ENCODE measurements at regions of chr1 and their contacts with region 1.

Region 1: GRCh38 chr1:235011599-235012435 is 116.8 kb downstream of the TOMM20 start:
- DNase-seq: peak; percentile 71 to 95 (median 93)
- ATAC-seq: peak; percentile 95
- H3K4me3 ChIP-seq: peak overlapping the region; percentile 48
- H3K4me3 Mint-ChIP-seq: peak overlapping the region; percentile 72 to 84 (median 80)
- H3K27ac ChIP-seq: peak overlapping the region; percentile 91
- H3K27ac Mint-ChIP-seq: peak overlapping the region; percentile 91 to 98 (median 97)
- H3K4me1 ChIP-seq: peaks cover 27 to 34% of the 10 kb centered on the region in 2 donors
- H3K4me1 Mint-ChIP-seq: peaks cover 36 to 79% (median 67%) of the 10 kb centered on the region in 7 donors
- H3K27me3 ChIP-seq: no peaks in the 10 kb centered on the region
- H3K27me3 Mint-ChIP-seq: peaks cover 0 to 5% (median 0%) of the 10 kb centered on the region in 5 donors

Region 2: GRCh38 chr1:234499119-234499942 is 512.5 kb before region 1 on chr1:
- CTCF ChIA-PET with region 1: interaction called, 3 read pairs
- POLR2A ChIA-PET with region 1: no interaction called
- intact Hi-C with region 1: loop called in 1 of 2 experiments (anchors 2 kb)
- DNase-seq: peak; percentile 65 to 85 (median 78)
- ATAC-seq: peak; percentile 96
- H3K4me3 ChIP-seq: no peak overlapping the region
- H3K4me3 Mint-ChIP-seq: peak overlapping the region in 2 of 10 donors; percentile 33 to 62
- H3K27ac ChIP-seq: no peak overlapping the region
- H3K27ac Mint-ChIP-seq: peak overlapping the region in 4 of 9 donors; percentile 34 to 82 (median 74)
- H3K4me1 ChIP-seq: peaks cover 0 to 4% of the 10 kb centered on the region in 2 donors
- H3K4me1 Mint-ChIP-seq: peaks cover 0 to 62% (median 6%) of the 10 kb centered on the region in 7 donors
- H3K27me3 ChIP-seq: no peaks in the 10 kb centered on the region
- H3K27me3 Mint-ChIP-seq: no peaks in the 10 kb centered on the region

Region 3: GRCh38 chr1:234730770-234731568 is 280.8 kb before region 1 on chr1:
- CTCF ChIA-PET with region 1: no interaction called
- POLR2A ChIA-PET with region 1: no interaction called
- intact Hi-C with region 1: loop called in 1 of 2 experiments (anchors 1 kb)
- DNase-seq: peak in 8 of 9 donors; percentile 47 to 82 (median 68)
- ATAC-seq: peak; percentile 76
- H3K4me3 ChIP-seq: no peak overlapping the region
- H3K4me3 Mint-ChIP-seq: peak overlapping the region; percentile 45 to 77 (median 64)
- H3K27ac ChIP-seq: peak overlapping the region; percentile 43
- H3K27ac Mint-ChIP-seq: peak overlapping the region; percentile 57 to 96 (median 87)
- H3K4me1 ChIP-seq: peaks cover 35 to 42% of the 10 kb centered on the region in 2 donors
- H3K4me1 Mint-ChIP-seq: peaks cover 38 to 82% (median 62%) of the 10 kb centered on the region in 7 donors
- H3K27me3 ChIP-seq: no peaks in the 10 kb centered on the region
- H3K27me3 Mint-ChIP-seq: no peaks in the 10 kb centered on the region

Region 4: DNA sequence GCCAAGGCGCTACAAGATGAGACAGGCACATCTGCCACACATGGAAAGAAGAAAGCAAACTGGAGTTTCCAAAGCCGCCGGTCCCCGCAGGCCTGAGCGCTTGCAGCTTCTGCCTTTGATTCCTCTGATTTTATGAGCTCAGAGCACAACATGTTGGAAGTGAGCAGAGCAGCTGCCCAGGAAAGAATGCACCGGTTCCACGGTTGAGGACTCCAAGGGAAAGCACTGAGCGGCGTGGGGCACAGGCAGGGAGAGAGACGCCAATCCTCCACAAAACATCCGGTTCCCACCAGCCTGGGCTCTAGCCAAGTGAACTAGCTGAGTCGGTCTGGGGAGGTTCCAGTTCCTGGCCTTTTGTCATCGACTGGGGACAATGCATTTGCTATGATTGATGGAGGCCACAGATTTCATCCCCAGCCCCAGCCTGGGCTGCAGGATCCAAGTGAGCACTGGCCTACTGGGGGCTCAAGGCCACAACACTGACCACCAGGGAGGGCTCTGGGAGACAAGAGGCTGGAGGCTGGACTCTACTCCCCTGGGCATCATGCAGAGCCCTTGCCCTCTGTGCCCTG is 148.8 kb before region 1 on chr1:
- CTCF ChIA-PET with region 1: no interaction called
- POLR2A ChIA-PET with region 1: no interaction called
- intact Hi-C with region 1: no loop called
- DNase-seq: no peak
- ATAC-seq: no peak
- H3K4me3 ChIP-seq: no peak overlapping the region
- H3K4me3 Mint-ChIP-seq: no peak overlapping the region
- H3K27ac ChIP-seq: no peak overlapping the region
- H3K27ac Mint-ChIP-seq: no peak overlapping the region
- H3K4me1 ChIP-seq: no peaks in the 10 kb centered on the region
- H3K4me1 Mint-ChIP-seq: peaks cover 0 to 33% (median 10%) of the 10 kb centered on the region in 7 donors
- H3K27me3 ChIP-seq: peaks cover 0 to 2% of the 10 kb centered on the region in 2 donors
- H3K27me3 Mint-ChIP-seq: no peaks in the 10 kb centered on the region

Region 5: GRCh38 chr1:234925440-234926263 is 86.2 kb before region 1 on chr1:
- CTCF ChIA-PET with region 1: no interaction called
- POLR2A ChIA-PET with region 1: interaction called, 4 read pairs
- intact Hi-C with region 1: loop called (anchors 1 to 5 kb)
- DNase-seq: peak in 3 of 9 donors; percentile 25 to 35 (median 30)
- ATAC-seq: peak; percentile 50
- H3K4me3 ChIP-seq: no peak overlapping the region
- H3K4me3 Mint-ChIP-seq: peak overlapping the region; percentile 45 to 80 (median 66)
- H3K27ac ChIP-seq: no peak overlapping the region
- H3K27ac Mint-ChIP-seq: peak overlapping the region; percentile 80 to 93 (median 83)
- H3K4me1 ChIP-seq: peaks cover 26 to 47% of the 10 kb centered on the region in 2 donors
- H3K4me1 Mint-ChIP-seq: peaks cover 37 to 60% (median 55%) of the 10 kb centered on the region in 7 donors
- H3K27me3 ChIP-seq: no peaks in the 10 kb centered on the region
- H3K27me3 Mint-ChIP-seq: no peaks in the 10 kb centered on the region

Region 6: GRCh38 chr1:235050911-235051360 is 39.1 kb after region 1 on chr1:
- CTCF ChIA-PET with region 1: no interaction called
- POLR2A ChIA-PET with region 1: no interaction called
- intact Hi-C with region 1: loop called in 1 of 2 experiments (anchors 1 kb)
- DNase-seq: no peak
- ATAC-seq: no peak
- H3K4me3 ChIP-seq: no peak overlapping the region
- H3K4me3 Mint-ChIP-seq: no peak overlapping the region
- H3K27ac ChIP-seq: no peak overlapping the region
- H3K27ac Mint-ChIP-seq: peak overlapping the region in 2 of 9 donors; percentile 9 to 26
- H3K4me1 ChIP-seq: no peaks in the 10 kb centered on the region
- H3K4me1 Mint-ChIP-seq: peaks cover 0 to 36% (median 0%) of the 10 kb centered on the region in 7 donors
- H3K27me3 ChIP-seq: no peaks in the 10 kb centered on the region
- H3K27me3 Mint-ChIP-seq: no peaks in the 10 kb centered on the region

Measured in naive thymus-derived CD4-positive, alpha-beta T cell (primary cell).